ENCODE measurements at regions of chr1 and their contacts with region 1.

Region 1: GRCh38 chr1:11907275-11908094 is 18.7 kb downstream of the KIAA2013 start:
- DNase-seq: peak; percentile 91
- ATAC-seq: peak; percentile 76 to 88

Region 2: DNA sequence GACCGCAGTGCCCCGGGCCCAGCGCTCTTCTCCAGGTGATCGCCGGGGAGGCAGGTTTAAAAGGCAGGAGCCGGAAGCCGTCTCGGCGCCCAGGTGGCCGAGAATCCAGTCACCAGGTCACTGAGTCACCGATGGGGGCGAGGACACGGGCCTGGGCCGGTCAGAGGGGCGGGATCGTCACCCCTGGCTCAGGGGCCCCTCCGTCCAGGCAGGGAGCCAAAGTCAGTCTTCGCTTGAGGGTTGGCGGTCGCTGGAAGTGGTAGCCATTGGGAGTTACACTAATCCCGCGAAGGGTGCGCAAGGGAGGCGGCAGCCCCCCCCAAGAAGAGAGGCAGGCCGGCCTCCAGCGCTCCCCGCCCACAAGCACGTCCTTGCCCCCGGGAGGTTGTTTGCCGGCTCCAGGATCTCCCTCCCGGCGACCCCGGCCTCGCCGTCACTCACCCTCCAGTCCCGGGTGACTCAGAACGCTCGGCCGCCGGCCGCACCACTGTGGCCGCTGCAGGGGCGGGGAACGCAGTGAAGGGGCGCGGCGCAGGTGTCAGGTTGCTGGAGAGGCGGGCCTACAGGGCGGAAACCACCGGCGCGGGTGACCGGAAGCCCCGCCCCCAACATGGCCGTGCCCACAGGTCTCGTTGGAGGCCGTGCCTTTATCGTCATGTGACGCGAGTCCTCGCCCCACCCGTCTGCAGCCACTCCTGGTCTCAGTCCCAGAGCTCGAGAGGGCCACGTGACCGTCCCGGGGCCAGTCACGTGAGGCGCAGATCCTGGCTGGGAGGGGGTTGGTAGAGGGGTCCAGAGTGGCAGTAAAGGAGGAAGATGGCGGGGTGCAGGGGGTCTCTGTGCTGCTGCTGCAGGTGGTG is 101.8 kb before region 1 on chr1 and contains the starts of genes CLCN6 and MTHFR:
- intact Hi-C with region 1: no loop called
- DNase-seq: peak; percentile 100
- ATAC-seq: peak; percentile 88 to 89
- total RNA-seq, gene CLCN6: 32.1 to 49.0 TPM
- total RNA-seq, gene MTHFR: 40.1 to 64.3 TPM

Region 3: DNA sequence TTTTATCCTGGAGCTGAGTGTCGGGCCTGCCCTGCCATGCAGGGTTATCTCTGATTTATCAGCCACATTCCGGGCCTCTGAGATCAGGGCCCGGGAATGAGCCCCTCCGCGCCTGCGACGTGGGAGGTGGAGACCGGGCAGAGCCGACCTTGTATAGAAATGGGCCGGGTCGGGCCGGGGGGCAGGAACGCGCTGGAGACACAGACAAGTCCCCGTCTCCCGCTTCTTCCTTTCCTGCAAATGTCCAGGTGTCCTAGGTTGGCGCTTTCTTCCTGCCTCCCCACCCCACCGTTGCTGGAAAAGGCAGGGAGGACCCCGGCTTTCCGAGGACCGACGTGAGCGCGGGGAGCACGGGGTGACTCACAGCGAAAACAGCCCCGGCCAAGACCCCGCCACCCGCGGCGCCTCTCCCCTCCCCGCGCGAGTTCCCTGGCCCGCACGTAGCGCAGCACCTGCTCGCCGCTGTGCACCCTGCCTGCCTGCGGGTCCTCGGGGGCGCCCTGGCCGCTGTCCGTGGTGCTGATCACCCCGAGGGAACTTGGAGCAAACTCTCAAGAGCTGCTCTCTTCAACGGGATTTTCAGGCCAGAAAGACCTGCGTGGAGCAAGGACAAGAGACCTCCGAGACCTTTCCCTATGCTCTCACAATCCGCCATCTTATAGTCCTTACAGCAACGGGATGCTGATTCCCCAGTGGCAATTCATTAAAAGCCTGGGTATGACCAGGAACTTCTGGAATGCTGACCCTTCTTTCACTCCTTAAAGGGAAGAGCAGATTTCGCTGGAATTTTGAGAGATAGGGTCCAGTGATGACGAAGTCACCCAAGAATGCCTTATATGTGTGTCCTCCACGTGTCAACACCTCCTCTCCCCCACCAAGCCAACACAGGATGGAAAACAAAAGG is 48.3 kb before region 1 on chr1:
- intact Hi-C with region 1: loop called in 1 of 2 experiments (anchors 2 kb)
- DNase-seq: peak; percentile 76
- ATAC-seq: peak; percentile 77 to 88

Region 4: GRCh38 chr1:11961230-11961629 is 53.7 kb after region 1 on chr1:
- intact Hi-C with region 1: no loop called
- DNase-seq: no peak
- ATAC-seq: peak in 1 of 2 donors; percentile 31

Region 5: DNA sequence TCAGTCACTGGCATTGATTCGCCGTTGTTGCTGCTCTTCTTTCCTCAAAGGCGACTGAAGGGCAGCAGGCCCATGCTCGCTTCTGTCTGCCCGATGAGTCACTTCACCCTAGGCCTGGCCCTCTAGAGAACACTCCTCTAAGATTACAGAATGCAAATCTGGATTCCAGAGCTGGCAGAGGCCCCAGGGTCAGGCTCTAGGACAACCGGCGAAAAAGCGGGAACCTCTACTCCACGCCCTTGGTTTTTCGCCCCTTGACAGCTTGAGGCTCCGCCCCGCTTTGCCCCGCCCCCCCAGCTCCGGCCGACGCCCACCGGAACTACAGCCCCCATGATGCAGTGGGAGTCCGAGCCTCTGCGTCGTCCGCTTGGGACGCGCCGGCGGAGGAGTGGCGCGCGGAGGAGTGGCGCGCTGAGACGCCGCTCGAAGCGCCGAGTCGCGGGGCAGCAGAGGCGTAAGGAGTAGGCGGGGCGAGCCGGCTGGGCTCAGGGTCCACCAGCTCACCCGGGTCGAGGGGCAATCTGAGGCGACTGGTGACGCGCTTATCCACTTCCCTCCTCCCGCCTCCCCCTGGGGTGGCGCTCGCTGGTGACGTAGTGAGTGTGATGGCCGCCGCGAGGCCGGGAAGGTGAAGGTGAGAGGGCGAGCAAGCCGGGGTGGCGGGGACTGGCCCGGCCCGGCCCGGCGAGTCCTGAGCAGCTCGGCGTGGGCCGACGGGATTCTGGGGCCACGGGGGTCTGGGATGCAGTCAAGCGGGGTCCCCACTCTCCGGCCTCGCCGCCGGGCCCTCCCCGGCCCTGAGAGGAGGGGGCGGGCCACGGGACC is 72.6 kb after region 1 on chr1 and contains the start of gene MFN2:
- intact Hi-C with region 1: loop called in 1 of 2 experiments (anchors 1 kb)
- DNase-seq: peak; percentile 98
- ATAC-seq: peak; percentile 93 to 94
- total RNA-seq, gene MFN2: 442 to 451 TPM

Measured in left cardiac atrium (tissue), 4 donors.